GM12878 (cell line): ENCODE measurements at regions of chr5 and their contacts with region 1.

Region 1: DNA sequence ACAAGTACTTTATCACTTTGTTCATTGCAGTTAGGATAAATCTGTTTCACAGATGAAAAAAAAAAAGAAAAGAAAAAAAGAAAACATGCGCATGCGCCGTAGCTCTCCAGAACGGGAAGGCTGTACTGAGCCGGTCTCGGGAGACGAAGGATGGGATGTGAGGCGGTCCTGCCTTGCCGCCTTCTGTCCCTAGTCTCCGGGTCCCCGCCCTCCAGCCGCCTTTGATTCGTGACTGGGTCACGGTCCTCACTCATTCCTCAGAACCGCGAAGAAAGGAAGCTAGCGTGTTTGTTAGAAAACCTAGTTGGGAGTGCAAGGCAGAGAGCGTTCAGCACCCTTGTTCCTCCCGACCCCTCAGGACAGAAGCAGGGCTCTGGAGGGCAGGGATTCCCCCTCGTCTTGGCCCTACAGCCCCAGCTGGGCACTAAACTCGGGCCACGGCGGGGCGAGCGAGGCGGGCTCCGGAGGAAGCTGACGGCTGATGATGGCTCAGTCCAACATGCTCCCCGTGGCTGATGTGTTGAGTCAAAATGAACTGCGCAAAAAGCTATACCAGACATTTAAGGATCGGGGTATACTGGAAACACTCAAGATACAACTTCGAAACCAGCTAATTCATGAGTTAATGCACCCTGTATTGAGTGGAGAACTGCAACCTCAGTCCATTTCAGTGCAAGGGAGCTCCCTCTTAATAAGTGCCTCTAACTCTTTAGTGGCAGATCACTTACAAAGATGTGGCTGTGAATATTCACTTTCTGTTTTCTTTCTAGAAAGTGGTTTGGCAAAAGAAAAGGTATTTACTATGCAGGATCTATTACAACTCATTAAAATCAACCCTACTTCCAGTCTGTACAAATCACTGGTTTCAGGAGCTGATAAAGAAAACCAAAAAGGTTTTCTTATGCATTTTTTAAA is 40.0 kb downstream of the CPLANE1 start:
- DNase-seq: no peak
- ATAC-seq: no peak
- H3K4me3 ChIP-seq: no peak overlapping the region
- H3K27ac ChIP-seq: no peak overlapping the region
- H3K4me1 ChIP-seq: peaks cover under 1% of the 10 kb centered on the region
- H3K27me3 ChIP-seq: no peaks in the 10 kb centered on the region
- CTCF ChIP-seq: no peak
- EP300 ChIP-seq: no peak
- POLR2A ChIP-seq: peak; percentile 40; the same call in 1 of the 2 replicates
- RAD21 ChIP-seq: no peak

Region 2: GRCh38 chr5:37197340-37198050 is 11.6 kb before region 1 on chr5:
- CTCF ChIA-PET with region 1: interaction called, 4 read pairs
- POLR2A ChIA-PET with region 1: no interaction called
- RAD21 ChIA-PET with region 1: interaction called, 4 read pairs
- SMC1A ChIA-PET with region 1: interaction called, 18 read pairs
- in situ Hi-C with region 1: no loop called
- intact Hi-C with region 1: no loop called
- DNase-seq: no peak
- ATAC-seq: peak; percentile 93
- H3K4me3 ChIP-seq: 0 out of 2 replicates have a peak overlapping the region, but pooled peaks have one; percentile 3
- H3K27ac ChIP-seq: peak overlapping the region; percentile 85
- H3K4me1 ChIP-seq: peaks cover 13% of the 10 kb centered on the region
- H3K27me3 ChIP-seq: no peaks in the 10 kb centered on the region
- CTCF ChIP-seq: no peak
- EP300 ChIP-seq: peak; percentile 23 to 48; a peak in 1 of 4 replicates
- POLR2A ChIP-seq: no peak
- RAD21 ChIP-seq: no peak

Region 3: GRCh38 chr5:37308796-37309195 is 99.7 kb after region 1 on chr5:
- CTCF ChIA-PET with region 1: no interaction called
- POLR2A ChIA-PET with region 1: no interaction called
- RAD21 ChIA-PET with region 1: no interaction called
- SMC1A ChIA-PET with region 1: no interaction called
- in situ Hi-C with region 1: no loop called
- intact Hi-C with region 1: no loop called
- DNase-seq: no peak
- ATAC-seq: no peak
- H3K4me3 ChIP-seq: no peak overlapping the region
- H3K27ac ChIP-seq: no peak overlapping the region
- H3K4me1 ChIP-seq: no peaks in the 10 kb centered on the region
- H3K27me3 ChIP-seq: no peaks in the 10 kb centered on the region
- CTCF ChIP-seq: no peak
- EP300 ChIP-seq: no peak
- POLR2A ChIP-seq: no peak
- RAD21 ChIP-seq: no peak

Region 4: DNA sequence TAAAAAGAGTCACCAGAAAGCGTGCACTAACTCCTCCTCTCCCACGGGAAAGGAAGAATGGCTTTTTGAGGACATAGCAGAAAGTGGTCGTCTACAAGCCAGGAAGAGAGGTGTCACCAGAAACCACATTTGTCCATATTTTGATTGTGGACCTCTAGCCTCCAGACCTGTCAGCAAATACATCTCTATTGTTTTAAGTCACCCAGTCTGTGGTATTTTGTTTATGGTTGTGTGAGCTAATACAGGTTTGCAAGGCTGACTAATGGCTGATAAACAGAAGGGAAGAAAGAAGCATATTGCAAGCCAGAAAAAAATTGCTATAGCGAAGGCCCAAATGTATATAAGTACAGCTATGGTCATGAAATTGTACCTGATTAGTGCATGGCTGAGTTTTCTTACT is 191.4 kb after region 1 on chr5:
- CTCF ChIA-PET with region 1: no interaction called
- POLR2A ChIA-PET with region 1: no interaction called
- RAD21 ChIA-PET with region 1: no interaction called
- SMC1A ChIA-PET with region 1: no interaction called
- in situ Hi-C with region 1: no loop called
- intact Hi-C with region 1: no loop called
- DNase-seq: no peak
- ATAC-seq: no peak
- H3K4me3 ChIP-seq: no peak overlapping the region
- H3K27ac ChIP-seq: no peak overlapping the region
- H3K4me1 ChIP-seq: no peaks in the 10 kb centered on the region
- H3K27me3 ChIP-seq: no peaks in the 10 kb centered on the region
- CTCF ChIP-seq: no peak
- EP300 ChIP-seq: no peak
- POLR2A ChIP-seq: no peak
- RAD21 ChIP-seq: no peak